ENCODE measurements at regions of chr1 and their contacts with region 1.

Region 1: GRCh38 chr1:168053681-168054080 is 83.0 kb downstream of the GPR161 start:
- DNase-seq: no peak
- ATAC-seq: no peak
- H3K4me3 ChIP-seq: no peak overlapping the region
- H3K4me3 Mint-ChIP-seq: no peak overlapping the region
- H3K27ac ChIP-seq: no peak overlapping the region
- H3K27ac Mint-ChIP-seq: peak overlapping the region; percentile 23
- H3K4me1 ChIP-seq: no peaks in the 10 kb centered on the region
- H3K4me1 Mint-ChIP-seq: peaks cover 11% of the 10 kb centered on the region
- H3K27me3 ChIP-seq: no peaks in the 10 kb centered on the region
- H3K27me3 Mint-ChIP-seq: no peaks in the 10 kb centered on the region
- CTCF ChIP-seq: no peak

Region 2: GRCh38 chr1:168092566-168093355 is 39.1 kb after region 1 on chr1:
- CTCF ChIA-PET with region 1: no interaction called
- POLR2A ChIA-PET with region 1: no interaction called
- intact Hi-C with region 1: loop called in 1 of 2 experiments (anchors 1 kb)
- DNase-seq: peak in 1 of 9 experiments; percentile 41
- ATAC-seq: no peak
- H3K4me3 ChIP-seq: no peak overlapping the region
- H3K4me3 Mint-ChIP-seq: no peak overlapping the region
- H3K27ac ChIP-seq: no peak overlapping the region
- H3K27ac Mint-ChIP-seq: no peak overlapping the region
- H3K4me1 ChIP-seq: no peaks in the 10 kb centered on the region
- H3K4me1 Mint-ChIP-seq: no peaks in the 10 kb centered on the region
- H3K27me3 ChIP-seq: no peaks in the 10 kb centered on the region
- H3K27me3 Mint-ChIP-seq: peaks cover 6% of the 10 kb centered on the region
- CTCF ChIP-seq: no peak

Measured in CD8-positive, alpha-beta T cell (primary cell).